ENCODE measurements at regions of chr1 and their contacts with region 1.

Region 1: DNA sequence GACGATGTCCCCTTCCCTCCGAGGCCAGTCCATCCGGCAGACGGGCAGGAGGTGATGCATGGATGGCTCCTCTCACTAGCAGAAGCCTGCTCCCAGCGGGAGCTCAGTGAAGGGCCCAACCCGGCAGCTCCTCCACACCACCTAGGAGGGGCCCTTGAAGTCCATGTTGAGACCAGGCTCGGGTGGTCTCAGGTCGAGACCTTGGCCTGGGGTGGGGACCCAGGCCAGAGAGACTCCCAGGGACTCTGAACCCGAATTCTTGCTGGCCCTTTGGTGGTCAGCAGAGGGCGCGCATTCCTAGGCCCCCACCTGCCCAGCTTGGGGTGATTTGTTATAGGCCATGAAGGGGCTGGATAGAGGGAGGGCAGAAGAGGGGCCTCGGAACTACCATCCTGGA is 642 bp upstream of the NT5C1A start:
- DNase-seq: no peak
- ATAC-seq: no peak
- H3K4me3 ChIP-seq: peak overlapping the region in 1 of 2 experiments; percentile 38; a peak in 1 of 4 replicates
- H3K27ac ChIP-seq: no peak overlapping the region
- H3K4me1 ChIP-seq: no peaks in the 10 kb centered on the region
- H3K27me3 ChIP-seq: peaks cover 13% of the 10 kb centered on the region
- CTCF ChIP-seq: peak; percentile 81; the same call in 1 of the 2 replicates

Region 2: DNA sequence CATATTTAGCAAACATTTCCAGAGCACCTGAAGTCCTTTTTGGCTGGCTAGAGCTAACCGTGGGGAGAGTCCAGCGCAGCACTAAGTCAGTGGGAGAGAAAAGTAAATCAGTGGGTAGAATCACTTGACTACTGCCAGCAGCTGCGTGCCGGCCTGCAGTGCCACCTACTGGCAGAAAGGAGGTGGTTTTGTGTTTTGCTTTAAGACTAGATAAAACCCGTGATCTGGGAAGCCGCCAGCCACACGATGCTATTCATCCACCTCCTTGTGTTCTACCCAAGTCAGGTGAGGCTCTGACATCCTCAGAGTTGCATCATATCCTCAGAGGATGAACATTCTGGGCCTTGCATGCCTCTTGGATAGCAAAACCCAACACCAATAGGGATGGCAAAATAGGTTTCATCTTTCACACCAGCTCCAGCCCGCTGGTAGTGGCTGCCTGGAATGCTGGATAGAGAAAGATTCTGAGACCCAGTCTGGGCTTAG is 19.0 kb before region 1 on chr1:
- CTCF ChIA-PET with region 1: interaction called, 10 read pairs
- POLR2A ChIA-PET with region 1: no interaction called
- in situ Hi-C with region 1: no loop called
- intact Hi-C with region 1: no loop called
- DNase-seq: peak; percentile 70
- ATAC-seq: peak; percentile 84
- H3K4me3 ChIP-seq: no peak overlapping the region
- H3K27ac ChIP-seq: no peak overlapping the region
- H3K4me1 ChIP-seq: no peaks in the 10 kb centered on the region
- H3K27me3 ChIP-seq: peaks cover 3% of the 10 kb centered on the region; the same call in 1 of the 2 replicates
- CTCF ChIP-seq: peak; percentile 96

Region 3: GRCh38 chr1:39995973-39996393 is 323.4 kb after region 1 on chr1:
- CTCF ChIA-PET with region 1: no interaction called
- POLR2A ChIA-PET with region 1: no interaction called
- in situ Hi-C with region 1: no loop called
- intact Hi-C with region 1: no loop called
- DNase-seq: no peak
- ATAC-seq: no peak
- H3K4me3 ChIP-seq: no peak overlapping the region
- H3K27ac ChIP-seq: no peak overlapping the region
- H3K4me1 ChIP-seq: no peaks in the 10 kb centered on the region
- H3K27me3 ChIP-seq: no peaks in the 10 kb centered on the region
- CTCF ChIP-seq: no peak

Measured in Panc1 (cell line).